ENCODE measurements at regions of chr17 and their contacts with region 1.

Region 1: DNA sequence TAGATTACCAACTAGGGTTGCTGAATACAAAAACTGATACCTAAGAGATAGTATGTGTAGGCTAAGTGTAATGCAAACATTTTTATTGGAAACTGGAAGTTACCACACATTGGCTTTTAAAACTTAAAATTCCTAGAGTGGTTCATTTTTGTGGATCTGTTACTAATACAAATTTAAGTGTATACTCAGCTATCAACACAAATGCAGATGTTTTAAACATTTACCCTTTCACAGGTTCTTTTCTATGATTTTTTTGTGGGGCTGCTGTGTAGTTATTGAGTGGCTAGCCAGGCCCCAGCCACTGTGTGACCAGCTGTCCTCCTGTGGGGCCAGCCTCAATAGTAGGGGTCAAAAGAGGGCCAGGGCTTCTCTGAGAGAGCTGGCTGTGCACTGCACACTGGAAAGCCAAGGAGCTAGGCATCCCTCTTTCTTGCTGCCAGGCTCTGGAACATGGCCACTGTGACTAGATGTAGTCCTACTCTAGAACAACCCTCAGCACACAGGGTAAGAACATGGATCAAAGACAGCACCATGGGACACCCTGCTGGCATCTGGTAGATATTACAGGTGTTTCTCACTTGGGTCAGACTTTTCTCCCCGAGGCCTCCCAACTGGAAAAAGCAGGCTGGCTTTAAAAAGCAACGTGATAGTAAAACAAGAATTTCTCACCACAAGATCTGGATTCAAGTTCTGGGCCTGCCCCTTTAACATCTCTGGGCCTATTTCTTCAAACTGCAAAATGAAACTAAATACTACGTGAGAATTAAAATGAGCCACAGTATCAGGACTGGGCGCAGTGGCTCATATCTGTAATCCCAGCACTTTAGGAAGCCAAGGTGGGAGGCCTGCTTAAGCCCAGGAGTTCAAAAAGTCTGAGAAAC is 7.3 kb upstream of the VEZF1 start:
- DNase-seq: no peak
- H3K4me3 ChIP-seq: no peak overlapping the region
- H3K27ac ChIP-seq: no peak overlapping the region
- H3K4me1 ChIP-seq: peaks cover 0 to 9% (median 0%) of the 10 kb centered on the region in 4 experiments; a peak in 1 of 7 replicates
- H3K27me3 ChIP-seq: no peaks in the 10 kb centered on the region
- CTCF ChIP-seq: peak; percentile 17 to 74 (median 67)
- EP300 ChIP-seq: no peak
- POLR2A ChIP-seq: peak; percentile 50 to 76
- RAD21 ChIP-seq: peak; percentile 79 to 84

Region 2: DNA sequence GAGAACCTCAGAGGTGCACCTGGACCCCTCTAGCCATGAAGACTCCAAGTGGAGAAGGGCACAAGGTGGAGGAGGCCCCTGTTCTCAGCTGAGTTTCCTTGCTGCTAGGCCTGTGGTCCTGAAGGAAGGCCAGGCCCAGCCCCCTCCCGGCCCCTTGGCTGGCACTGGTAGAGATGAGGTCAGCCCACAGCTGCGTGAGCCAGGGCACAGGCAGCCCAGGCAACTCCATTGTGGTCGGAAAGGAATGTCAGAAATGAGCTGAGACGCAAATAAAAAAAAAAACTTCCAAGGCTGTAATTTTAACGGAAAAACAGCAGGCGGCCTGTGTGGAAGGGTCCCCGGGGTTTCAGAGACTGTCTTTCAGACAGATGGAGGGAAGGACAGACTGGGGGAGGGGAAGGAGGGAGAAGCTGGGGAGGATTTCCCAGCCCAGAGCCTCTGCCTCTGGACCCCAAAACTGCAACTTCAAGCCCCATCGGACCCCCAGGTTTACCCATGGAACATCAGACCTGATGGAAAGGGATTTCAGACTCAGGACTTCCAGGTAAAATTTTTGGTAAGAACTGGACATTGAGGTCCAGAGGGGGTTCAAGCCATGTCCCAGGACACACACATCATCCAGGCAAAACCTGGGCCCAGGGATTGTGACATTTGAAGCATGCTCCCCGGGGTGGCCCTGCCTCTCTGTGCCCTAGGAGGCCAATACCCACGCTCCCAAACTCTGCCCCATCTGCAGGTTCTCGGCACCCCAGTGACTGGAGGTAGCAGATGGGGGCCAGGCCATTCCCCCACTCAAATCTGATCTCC is 119.8 kb before region 1 on chr17:
- CTCF ChIA-PET with region 1: interaction called, 134 read pairs
- POLR2A ChIA-PET with region 1: interaction called, 672 read pairs
- DNase-seq: peak; percentile 71 to 72
- H3K4me3 ChIP-seq: peak overlapping the region in 2 of 4 experiments; percentile 11 to 32; a peak in 5 of 8 replicates
- H3K27ac ChIP-seq: peak overlapping the region; percentile 32; the same call in 1 of the 2 replicates
- H3K4me1 ChIP-seq: peaks cover 21 to 50% (median 37%) of the 10 kb centered on the region in 4 experiments
- H3K27me3 ChIP-seq: peaks cover 0 to 14% (median 6%) of the 10 kb centered on the region in 4 experiments; a peak in 4 of 7 replicates
- CTCF ChIP-seq: 0 out of 4 replicates have a peak, but pooled peaks of 1 of the 3 experiments have one; percentile 6
- EP300 ChIP-seq: no peak
- POLR2A ChIP-seq: no peak
- RAD21 ChIP-seq: peak in 1 of 2 experiments; percentile 20; a peak in 2 of 4 replicates

Region 3: GRCh38 chr17:57946798-57947358 is 48.4 kb before region 1 on chr17:
- CTCF ChIA-PET with region 1: interaction called, 10 read pairs
- POLR2A ChIA-PET with region 1: interaction called, 26 read pairs
- DNase-seq: no peak
- H3K4me3 ChIP-seq: no peak overlapping the region
- H3K27ac ChIP-seq: 0 out of 2 replicates have a peak overlapping the region, but pooled peaks have one; percentile 3
- H3K4me1 ChIP-seq: peaks cover 3 to 13% (median 7%) of the 10 kb centered on the region in 4 experiments
- H3K27me3 ChIP-seq: no peaks in the 10 kb centered on the region
- CTCF ChIP-seq: no peak
- EP300 ChIP-seq: no peak
- POLR2A ChIP-seq: no peak
- RAD21 ChIP-seq: no peak

Region 4: GRCh38 chr17:57982452-57983170 is 12.7 kb before region 1 on chr17:
- CTCF ChIA-PET with region 1: interaction called, 13 read pairs
- POLR2A ChIA-PET with region 1: interaction called, 14 read pairs
- DNase-seq: no peak
- H3K4me3 ChIP-seq: no peak overlapping the region
- H3K27ac ChIP-seq: no peak overlapping the region
- H3K4me1 ChIP-seq: peaks cover 0 to 2% (median 0%) of the 10 kb centered on the region in 4 experiments; a peak in 1 of 7 replicates
- H3K27me3 ChIP-seq: no peaks in the 10 kb centered on the region
- CTCF ChIP-seq: no peak
- EP300 ChIP-seq: no peak
- POLR2A ChIP-seq: no peak
- RAD21 ChIP-seq: no peak

Region 5: DNA sequence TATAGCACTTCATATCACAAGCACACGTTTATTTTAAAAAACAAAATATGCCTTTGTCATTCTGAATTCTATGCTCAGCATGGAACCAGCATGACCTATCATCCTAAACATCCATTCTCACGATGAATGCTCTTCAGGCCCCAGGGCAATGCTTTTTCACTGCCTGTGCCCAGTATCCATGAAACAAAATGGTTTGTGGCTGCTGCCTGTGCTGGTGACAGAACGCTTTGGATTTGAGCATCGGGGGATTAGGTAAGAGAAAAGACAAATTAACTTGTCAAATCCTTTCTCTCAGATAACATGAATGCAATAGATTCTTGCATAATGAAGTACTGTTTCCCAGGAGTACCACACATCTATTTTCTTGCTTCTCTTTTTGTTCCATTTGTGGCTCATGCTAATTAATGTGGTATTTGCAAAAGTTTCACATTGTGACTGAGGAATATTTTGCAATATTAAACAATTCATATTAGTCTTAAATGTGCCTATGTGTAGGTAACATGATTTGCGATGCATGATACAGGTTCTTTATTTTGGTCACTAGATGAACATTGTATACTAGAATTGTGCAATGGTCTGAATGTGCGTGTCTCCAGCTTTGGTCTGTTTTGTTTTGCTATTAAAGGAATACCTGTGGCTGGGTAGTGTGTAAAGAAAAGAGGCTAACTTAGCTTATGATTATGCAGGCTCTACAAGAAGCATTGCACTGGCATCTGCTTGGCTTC is 37.5 kb after region 1 on chr17:
- CTCF ChIA-PET with region 1: interaction called, 6 read pairs
- POLR2A ChIA-PET with region 1: interaction called, 11 read pairs
- DNase-seq: peak in 1 of 2 experiments; percentile 27
- H3K4me3 ChIP-seq: no peak overlapping the region
- H3K27ac ChIP-seq: no peak overlapping the region
- H3K4me1 ChIP-seq: peaks cover 0 to 9% (median 2%) of the 10 kb centered on the region in 4 experiments; a peak in 2 of 7 replicates
- H3K27me3 ChIP-seq: no peaks in the 10 kb centered on the region
- CTCF ChIP-seq: no peak
- EP300 ChIP-seq: no peak
- POLR2A ChIP-seq: no peak
- RAD21 ChIP-seq: no peak

Region 6: DNA sequence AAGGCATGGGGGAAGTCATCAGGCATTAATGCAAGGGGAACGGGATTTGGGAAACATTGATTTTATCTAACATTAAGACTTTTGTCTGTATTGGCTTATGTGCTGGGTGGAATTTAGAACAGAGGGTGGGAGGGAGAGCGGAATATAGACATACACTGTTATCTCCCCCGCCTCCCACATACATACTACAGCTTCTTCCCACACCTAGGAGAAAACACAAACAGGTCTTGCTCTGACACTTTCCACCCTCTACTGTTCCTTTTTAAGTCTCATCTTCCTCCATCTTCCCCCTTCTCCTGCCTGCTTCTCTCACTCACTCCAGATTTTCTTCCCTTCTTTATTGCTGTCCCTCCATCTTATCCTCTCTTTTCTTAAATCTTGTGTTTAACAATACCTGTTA is 153.3 kb after region 1 on chr17:
- CTCF ChIA-PET with region 1: no interaction called
- POLR2A ChIA-PET with region 1: no interaction called
- DNase-seq: no peak
- H3K4me3 ChIP-seq: no peak overlapping the region
- H3K27ac ChIP-seq: no peak overlapping the region
- H3K4me1 ChIP-seq: no peaks in the 10 kb centered on the region; a peak in 1 of 7 replicates
- H3K27me3 ChIP-seq: no peaks in the 10 kb centered on the region; a peak in 1 of 7 replicates
- CTCF ChIP-seq: no peak
- EP300 ChIP-seq: no peak
- POLR2A ChIP-seq: no peak
- RAD21 ChIP-seq: no peak

Measured in H1 (cell line).